ENCODE measurements at regions of chr12 and their contacts with region 1.

Region 1: GRCh38 chr12:57462251-57462911 is 2.8 kb downstream of the GLI1 start:
- DNase-seq: peak; percentile 87 to 91
- ATAC-seq: peak; percentile 81 to 86 (median 84)
- H3K4me3 ChIP-seq: peak overlapping the region; percentile 77
- H3K27ac ChIP-seq: peak overlapping the region; percentile 72
- H3K4me1 ChIP-seq: peaks cover 20% of the 10 kb centered on the region
- H3K27me3 ChIP-seq: peaks cover 0 to 8% (median 6%) of the 10 kb centered on the region in 3 donors
- CTCF ChIP-seq: peak; percentile 85

Region 2: DNA sequence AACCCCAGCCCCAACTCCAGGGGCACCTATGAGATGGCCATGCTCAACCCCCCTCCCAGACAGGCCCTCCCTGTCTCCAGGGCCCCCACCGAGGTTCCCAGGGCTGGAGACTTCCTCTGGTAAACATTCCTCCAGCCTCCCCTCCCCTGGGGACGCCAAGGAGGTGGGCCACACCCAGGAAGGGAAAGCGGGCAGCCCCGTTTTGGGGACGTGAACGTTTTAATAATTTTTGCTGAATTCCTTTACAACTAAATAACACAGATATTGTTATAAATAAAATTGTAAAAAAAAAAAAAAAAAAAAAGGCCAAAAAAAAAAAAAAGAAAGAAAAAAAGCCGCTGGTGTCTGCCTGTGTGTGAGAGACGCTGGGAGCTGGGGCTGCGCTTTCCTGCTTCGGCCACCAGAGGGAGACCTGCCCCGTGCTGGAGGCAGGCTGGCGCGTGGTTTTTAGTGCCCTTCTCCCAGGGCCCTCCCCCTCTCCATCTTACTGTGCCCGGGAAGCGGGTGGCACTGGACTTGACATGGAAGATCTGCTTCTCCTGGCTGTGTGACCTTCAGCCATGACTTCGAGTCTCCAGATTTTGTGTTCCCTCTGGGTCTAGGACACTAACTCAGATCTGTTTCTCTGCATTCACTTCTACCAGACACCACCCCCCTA is 249.2 kb before region 1 on chr12:
- intact Hi-C with region 1: loop called (anchors 2 to 10 kb)
- DNase-seq: peak; percentile 84 to 93
- ATAC-seq: peak; percentile 82 to 90 (median 88)
- H3K4me3 ChIP-seq: no peak overlapping the region
- H3K27ac ChIP-seq: no peak overlapping the region
- H3K4me1 ChIP-seq: peaks cover 14% of the 10 kb centered on the region
- H3K27me3 ChIP-seq: peaks cover 0 to 32% (median 17%) of the 10 kb centered on the region in 3 donors
- CTCF ChIP-seq: peak; percentile 94

Region 3: DNA sequence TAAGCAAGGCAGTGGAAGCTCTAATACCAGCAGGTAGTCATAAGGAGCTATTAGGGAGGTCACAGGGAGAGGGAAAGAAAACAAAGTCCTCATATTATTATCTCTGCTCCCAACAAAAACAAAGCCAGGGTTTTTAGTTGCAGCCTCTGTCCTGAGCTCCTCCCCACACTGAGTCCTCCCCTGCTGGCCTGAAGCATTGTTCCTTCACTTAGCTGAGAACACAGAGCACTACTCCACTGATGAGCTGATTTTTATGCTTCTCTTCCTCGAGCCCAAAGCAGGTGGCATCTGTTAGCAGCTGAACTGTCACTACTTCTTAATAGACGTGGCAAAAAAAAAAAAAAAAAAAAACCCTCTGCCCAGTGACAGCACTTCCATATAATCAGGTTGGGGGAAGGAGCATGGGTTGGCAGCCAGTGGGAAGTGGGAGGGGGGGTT is 200.9 kb before region 1 on chr12:
- intact Hi-C with region 1: loop called in 1 of 2 experiments (anchors 5 kb)
- DNase-seq: no peak
- ATAC-seq: peak; percentile 39 to 76 (median 61)
- H3K4me3 ChIP-seq: peak overlapping the region; percentile 35
- H3K27ac ChIP-seq: peak overlapping the region; percentile 81
- H3K4me1 ChIP-seq: peaks cover 78% of the 10 kb centered on the region
- H3K27me3 ChIP-seq: no peaks in the 10 kb centered on the region
- CTCF ChIP-seq: no peak

Region 4: GRCh38 chr12:57309420-57309819 is 153.0 kb before region 1 on chr12:
- intact Hi-C with region 1: loop called in 1 of 2 experiments (anchors 2 kb)
- DNase-seq: no peak
- ATAC-seq: no peak
- H3K4me3 ChIP-seq: no peak overlapping the region
- H3K27ac ChIP-seq: no peak overlapping the region
- H3K4me1 ChIP-seq: no peaks in the 10 kb centered on the region
- H3K27me3 ChIP-seq: no peaks in the 10 kb centered on the region
- CTCF ChIP-seq: no peak

Region 5: GRCh38 chr12:57522011-57522886 is 59.9 kb after region 1 on chr12 and contains the start of gene MBD6:
- intact Hi-C with region 1: no loop called
- DNase-seq: peak; percentile 94 to 97
- ATAC-seq: peak; percentile 41 to 62 (median 52)
- H3K4me3 ChIP-seq: peak within 1 kb of the TSS; percentile 96
- H3K27ac ChIP-seq: peak within 1 kb of the TSS; percentile 100
- H3K4me1 ChIP-seq: peaks cover 47% of the 10 kb centered on the region
- H3K27me3 ChIP-seq: no peaks in the 10 kb centered on the region
- CTCF ChIP-seq: no peak
- total RNA-seq, gene MBD6: 29.5 to 52.9 (median 39.5) TPM

Region 6: GRCh38 chr12:57621497-57622292 is 159.3 kb after region 1 on chr12:
- intact Hi-C with region 1: loop called (anchors 5 to 10 kb)
- DNase-seq: peak; percentile 64 to 81
- ATAC-seq: peak; percentile 78 to 85 (median 82)
- H3K4me3 ChIP-seq: peak overlapping the region; percentile 61
- H3K27ac ChIP-seq: no peak overlapping the region
- H3K4me1 ChIP-seq: peaks cover 7% of the 10 kb centered on the region
- H3K27me3 ChIP-seq: peaks cover 0 to 64% (median 12%) of the 10 kb centered on the region in 3 donors
- CTCF ChIP-seq: peak; percentile 91